Left colon (tissue), 2 donors: ENCODE measurements at regions of chr2 and their contacts with region 1.

Region 1: GRCh38 chr2:182650704-182651103 is 65.4 kb upstream of the DNAJC10 start:
- DNase-seq: no peak
- ATAC-seq: no peak

Region 2: DNA sequence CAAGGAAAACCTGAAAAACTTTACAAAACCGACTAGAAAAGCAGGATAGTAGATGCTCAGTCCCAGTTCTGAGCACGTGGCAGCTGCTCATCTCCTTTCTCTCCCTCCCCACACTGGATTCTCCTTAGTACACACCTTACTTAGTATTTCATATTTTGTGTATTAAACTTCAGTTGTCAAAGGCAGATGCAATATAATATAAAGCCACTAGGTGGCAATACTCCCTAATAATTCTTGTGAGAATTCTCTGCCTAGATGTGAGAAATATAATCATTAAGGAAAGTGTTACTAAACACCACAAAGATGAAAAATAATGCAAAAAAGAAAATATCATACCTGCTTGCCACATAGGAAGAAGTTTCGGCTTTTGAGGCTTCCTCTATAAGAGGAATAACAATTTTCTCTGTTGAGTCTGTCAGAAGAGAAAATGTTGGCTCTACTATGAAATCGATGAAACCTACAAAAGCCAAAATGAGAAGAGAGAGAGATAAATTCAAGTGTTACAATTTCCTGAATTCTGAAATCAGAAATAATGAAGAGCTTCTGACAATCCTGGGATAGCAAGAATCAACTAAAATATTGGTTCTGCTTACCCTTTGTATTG is 464.5 kb before region 1 on chr2:
- intact Hi-C with region 1: loop called (anchors 2 to 10 kb)
- DNase-seq: no peak
- ATAC-seq: peak; percentile 27

Region 3: DNA sequence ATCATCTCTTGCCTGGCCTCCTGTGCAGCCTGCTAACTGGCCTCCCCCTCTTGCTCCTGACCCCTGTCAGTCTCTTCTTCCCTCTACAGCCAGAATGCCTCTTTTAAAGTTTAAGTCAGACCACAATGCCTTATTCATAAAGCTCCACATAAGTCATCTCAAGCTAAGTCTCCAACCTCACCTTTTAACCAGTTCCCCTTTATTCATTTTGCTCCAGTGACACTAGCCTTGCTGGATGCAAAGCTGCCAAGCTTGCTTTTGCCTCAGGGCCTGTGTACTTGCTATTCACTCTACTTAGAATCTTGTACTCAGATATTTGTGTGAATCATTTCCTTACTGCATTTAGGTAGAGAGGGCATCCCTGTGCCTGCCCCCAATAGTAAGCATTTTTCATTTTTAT is 404.7 kb before region 1 on chr2:
- intact Hi-C with region 1: loop called in 1 of 2 experiments (anchors 5 kb)
- DNase-seq: no peak
- ATAC-seq: no peak